Right ventricle myocardium superior (tissue), 1 donor: ENCODE measurements at regions of chr15 and their contacts with region 1.

Region 1: DNA sequence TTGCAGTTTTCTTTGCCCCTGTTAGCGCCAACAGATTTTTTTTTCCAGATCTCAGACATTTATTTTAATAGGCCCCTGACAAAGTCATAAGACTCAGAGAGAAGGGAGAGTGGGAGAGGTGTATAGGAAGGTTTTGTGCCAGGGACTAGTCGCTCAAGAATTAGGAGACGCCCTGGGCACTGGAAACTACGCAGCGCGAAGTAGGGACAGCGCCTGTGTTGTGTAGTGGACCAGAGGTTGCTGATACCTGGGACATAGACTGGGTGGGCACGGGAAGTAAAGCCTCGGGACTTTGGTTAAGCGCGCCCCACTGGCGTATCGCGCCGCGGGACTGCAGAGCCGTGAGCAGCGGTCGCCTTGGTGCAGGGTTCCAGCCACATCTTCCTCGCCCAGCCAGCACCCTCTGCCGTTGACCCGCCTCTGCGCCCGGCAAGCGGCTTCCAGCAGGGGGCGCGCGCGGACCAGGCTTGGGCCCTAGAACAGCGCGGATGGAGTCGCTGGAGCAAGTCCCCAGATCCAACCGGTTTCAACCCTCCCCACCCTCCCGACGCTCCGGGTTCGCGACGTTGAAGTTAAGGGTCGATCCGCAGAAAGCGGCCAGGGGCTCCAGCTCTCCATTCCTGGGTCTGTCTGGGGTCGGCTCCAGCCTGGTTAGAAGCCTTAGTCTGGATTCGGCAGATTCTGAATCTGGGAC is 3.0 kb upstream of the ISLR2 start:
- DNase-seq: peak; percentile 94
- ATAC-seq: peak; percentile 99

Region 2: DNA sequence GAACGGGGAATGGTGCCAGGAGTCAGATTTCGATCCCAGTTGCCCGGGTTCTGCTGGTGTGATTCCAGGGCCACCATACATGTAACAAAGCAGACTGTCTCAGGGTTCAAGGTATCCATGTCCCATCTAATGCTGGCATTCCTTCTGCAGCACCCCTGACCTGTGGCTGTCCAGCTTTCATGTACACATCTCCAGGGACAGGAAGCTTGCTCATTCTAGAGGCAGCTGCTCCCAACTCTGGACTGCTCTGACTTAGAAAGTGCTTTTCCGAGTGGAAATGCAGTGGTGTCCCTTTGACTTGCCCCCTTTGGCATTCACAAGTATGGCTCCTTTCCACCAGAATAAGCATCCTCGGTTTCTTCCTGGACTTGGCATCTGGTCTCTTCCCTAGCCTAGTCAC is 102.0 kb before region 1 on chr15:
- intact Hi-C with region 1: no loop called
- DNase-seq: no peak
- ATAC-seq: no peak

Region 3: GRCh38 chr15:74307827-74308644 is 180.6 kb after region 1 on chr15:
- intact Hi-C with region 1: loop called (anchors 2 kb)
- DNase-seq: no peak
- ATAC-seq: peak; percentile 80

Region 4: GRCh38 chr15:74322181-74323076 is 195.0 kb after region 1 on chr15:
- intact Hi-C with region 1: loop called (anchors 5 kb)
- DNase-seq: peak; percentile 81
- ATAC-seq: peak; percentile 72

Region 5: GRCh38 chr15:74333662-74334061 is 206.3 kb after region 1 on chr15:
- intact Hi-C with region 1: no loop called
- DNase-seq: no peak
- ATAC-seq: no peak